Mucosa of descending colon (tissue), 3 donors: ENCODE measurements at regions of chr14 and their contacts with region 1.

Region 1: DNA sequence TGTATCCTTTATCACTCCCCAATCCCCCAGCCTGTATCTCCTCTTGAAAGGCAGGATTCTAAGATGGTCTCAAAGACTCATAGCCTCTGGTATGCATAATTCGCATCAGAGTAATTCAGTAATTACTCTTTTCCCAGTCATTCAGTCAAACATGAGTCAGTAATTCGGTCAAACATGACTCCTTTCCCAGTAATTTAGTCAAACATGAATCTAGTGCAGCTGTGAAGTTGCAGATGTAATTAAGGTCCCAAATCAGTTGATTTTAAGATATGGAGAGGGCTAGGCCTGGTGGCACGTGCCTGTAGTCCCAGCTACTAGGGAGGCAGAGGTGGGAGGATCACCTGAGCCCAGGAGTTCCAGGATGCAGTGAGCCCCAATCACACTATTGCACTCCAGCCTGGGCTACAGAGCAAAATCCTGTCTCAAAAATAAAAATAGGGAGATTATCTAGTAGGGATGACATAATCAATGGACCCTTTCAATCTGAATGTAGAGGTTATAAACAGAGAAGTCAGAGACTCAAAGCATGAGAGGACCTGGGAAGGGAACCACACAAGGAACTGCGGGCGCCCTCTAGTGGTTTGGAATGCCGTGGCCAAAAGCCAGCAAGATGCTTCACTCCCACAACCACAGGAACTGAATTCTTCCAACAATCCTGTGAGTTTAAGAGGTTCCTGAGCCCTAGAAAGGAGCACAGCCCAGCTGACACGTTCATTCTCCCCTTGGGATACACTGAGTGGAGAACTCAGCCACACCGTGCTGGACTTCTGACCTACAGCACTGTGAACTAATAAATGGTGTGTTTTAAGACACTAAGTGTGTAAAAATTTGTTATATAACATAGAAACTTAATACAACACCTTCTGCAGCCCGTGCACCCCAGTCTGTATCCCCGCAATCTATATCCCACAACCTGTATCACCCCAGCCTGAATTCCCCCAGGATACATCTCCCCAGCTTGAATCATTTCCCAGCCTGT is 14.3 kb upstream of the ARMH4 start:
- DNase-seq: peak; percentile 71 to 94 (median 85)
- ATAC-seq: peak; percentile 85
- H3K4me3 ChIP-seq: no peak overlapping the region
- H3K4me1 ChIP-seq: peaks cover 2% of the 10 kb centered on the region
- CTCF ChIP-seq: peak; percentile 79

Region 2: DNA sequence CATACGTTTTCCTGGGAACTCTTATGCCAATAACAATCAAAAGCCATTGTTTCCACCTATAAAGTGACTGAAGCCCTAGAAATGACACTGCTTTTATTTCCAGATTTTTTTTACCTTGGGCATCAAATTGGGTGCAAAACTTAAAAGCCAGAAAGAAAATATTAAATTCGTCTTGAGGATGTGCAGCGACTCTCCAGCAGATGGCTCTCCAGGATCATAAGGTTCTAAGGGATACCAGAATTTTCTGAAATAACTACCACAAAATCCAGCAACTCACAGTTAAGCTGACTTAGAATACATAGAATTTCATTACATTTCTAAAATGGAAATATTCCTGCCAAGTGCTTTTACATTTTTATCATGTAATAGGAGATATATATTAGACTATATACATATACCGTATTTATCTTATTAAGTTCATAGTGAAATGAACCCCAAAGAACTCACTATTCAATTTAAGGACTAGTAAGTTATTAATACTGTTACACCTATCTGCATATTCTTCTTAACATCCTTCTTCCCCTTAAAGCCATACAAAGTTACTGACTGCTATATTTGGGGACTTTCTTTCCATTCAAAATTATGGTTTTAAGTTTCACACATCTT is 58.2 kb before region 1 on chr14:
- intact Hi-C with region 1: loop called (anchors 5 to 10 kb)
- DNase-seq: peak in 1 of 3 donors; percentile 64
- ATAC-seq: no peak
- H3K4me3 ChIP-seq: no peak overlapping the region
- H3K4me1 ChIP-seq: no peaks in the 10 kb centered on the region
- CTCF ChIP-seq: peak; percentile 23